ENCODE measurements at regions of chrX and their contacts with region 1.

Region 1: DNA sequence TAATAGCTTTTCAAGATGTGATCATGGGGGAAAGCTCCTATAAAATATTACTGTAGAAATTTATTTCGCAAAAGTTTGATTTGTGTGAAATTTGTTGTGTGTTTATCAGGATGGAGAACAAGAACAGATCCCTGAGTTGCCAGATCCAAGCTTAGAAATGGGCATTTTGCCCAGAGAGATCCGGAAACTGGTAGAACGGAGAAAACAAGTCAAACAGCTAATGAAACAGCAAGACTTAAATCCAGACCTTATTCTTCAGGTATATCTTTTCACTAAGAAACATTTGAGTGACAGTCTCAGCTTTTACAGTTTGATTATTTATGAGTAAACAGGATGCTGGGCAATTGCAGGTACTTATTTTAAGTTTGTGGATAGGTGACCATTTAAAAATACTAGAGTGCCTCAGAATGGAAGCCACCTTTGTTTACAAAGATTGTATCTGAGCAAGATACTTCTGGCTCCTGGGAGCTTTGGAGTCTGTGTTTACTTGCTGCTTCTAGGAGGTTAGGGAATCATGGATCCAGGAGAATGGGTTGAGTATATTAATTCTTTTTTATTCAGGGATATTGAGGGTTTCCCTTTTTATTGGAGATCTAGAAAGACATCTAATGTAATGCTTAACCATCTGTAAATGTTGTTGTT is 54.6 kb downstream of the POLA1 start:
- DNase-seq: no peak
- H3K4me3 ChIP-seq: no peak overlapping the region
- CTCF ChIP-seq: no peak

Region 2: DNA sequence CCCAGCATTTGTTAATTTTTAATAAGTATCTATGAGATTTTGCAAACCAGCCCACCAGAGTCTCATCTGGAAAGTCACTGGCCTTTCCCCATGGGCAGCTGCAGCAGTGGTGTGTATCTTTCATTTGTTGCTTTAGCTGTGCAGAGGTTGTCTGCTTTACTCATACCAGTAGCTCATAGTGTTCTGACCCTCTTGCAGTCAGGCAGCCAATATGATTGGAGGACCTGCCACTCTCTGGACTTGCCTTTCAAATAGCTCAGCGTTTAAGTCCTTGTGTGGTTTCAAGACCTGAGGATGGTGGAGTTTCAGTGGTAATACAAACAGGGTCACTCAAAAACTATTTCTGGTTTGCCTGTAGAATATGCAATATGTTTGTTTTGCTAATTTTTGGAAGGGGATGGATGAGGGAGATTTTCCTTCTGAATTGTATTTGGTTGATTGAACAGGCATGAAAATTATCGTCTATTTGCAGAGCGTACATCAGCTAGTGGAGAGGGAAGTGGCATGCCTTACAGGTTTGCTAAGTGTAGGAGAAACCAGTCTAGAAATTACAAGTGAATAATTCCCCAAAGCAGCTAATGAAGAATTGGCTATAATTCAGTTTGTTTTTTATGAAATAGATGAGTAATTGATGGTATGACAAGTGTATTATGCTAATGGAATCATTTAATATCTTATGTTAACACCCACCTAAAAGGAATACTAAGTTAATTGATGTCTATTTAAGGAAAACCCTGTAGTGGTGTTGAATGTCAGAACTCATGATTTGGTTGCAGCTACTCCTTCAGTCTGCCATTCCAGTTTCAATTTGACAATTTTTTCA is 45.8 kb before region 1 on chrX:
- in situ Hi-C with region 1: loop called (anchors 5 kb)
- DNase-seq: no peak
- H3K4me3 ChIP-seq: no peak overlapping the region
- CTCF ChIP-seq: no peak

Region 3: GRCh38 chrX:24838629-24839028 is 90.3 kb after region 1 on chrX:
- in situ Hi-C with region 1: no loop called
- DNase-seq: peak; percentile 24
- H3K4me3 ChIP-seq: no peak overlapping the region
- CTCF ChIP-seq: peak; percentile 29